GM10248 (cell line): ENCODE measurements at regions of chr21 and their contacts with region 1.

Region 1: DNA sequence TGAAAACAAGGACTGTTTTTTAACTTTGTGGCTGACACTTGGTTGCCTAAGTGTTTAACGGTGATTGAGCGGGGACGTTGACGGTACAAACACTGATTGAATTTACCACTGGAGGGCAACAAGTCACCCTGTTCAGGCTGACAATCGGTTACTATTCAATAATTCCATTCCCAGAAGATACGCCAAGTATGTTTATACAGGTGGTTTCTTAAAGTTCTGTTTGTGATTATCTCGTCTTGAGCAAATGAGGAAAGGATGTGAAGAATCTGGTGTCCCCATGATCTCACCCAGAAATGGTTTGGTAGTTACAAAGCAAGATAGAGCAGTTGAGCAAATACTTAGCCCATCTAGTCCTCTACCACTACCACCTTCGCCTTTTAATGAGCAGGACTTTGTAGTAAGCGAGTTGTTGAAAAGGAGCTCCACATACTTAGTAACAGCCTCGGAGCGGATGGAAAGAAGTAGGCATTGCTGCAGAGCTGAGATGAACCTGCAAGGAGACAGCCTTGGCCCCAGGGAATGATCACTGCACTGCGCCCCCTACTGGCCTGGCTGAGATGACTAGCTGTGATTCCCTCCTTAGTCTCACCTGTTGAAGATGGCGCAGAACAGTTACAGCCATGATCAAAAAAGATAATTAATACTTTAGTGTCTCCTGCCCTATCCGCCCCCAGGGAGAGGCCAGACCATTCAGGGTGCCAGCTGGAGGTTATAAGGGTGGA is 36.3 kb downstream of the IFNAR1 start:
- DNase-seq: peak; percentile 80
- CTCF ChIP-seq: peak; percentile 92

Region 2: DNA sequence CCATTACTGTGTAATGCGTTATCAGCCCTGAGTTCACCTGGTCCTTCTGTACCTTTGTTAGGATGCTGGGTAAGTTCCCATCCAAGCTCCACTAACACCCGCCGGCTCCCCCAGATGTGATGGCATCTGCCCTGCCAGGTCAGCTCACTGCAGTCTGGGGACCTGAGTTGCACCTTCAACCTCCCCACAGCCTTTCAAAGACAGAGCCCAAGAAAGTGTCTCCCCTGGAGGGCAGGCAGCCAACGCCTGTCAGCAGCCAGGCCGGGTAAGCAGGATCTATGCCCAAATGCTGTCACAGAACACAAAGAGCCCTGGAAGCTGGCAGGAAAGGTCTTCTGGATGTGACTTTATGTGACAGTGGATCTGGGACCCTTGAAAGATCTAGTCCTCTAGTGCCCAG is 1048.7 kb before region 1 on chr21:
- CTCF ChIA-PET with region 1: no interaction called
- POLR2A ChIA-PET with region 1: no interaction called
- DNase-seq: no peak
- CTCF ChIP-seq: no peak

Region 3: GRCh38 chr21:33205476-33205875 is 155.6 kb before region 1 on chr21:
- CTCF ChIA-PET with region 1: interaction called, 26 read pairs
- POLR2A ChIA-PET with region 1: no interaction called
- DNase-seq: no peak
- CTCF ChIP-seq: peak; percentile 24

Region 4: DNA sequence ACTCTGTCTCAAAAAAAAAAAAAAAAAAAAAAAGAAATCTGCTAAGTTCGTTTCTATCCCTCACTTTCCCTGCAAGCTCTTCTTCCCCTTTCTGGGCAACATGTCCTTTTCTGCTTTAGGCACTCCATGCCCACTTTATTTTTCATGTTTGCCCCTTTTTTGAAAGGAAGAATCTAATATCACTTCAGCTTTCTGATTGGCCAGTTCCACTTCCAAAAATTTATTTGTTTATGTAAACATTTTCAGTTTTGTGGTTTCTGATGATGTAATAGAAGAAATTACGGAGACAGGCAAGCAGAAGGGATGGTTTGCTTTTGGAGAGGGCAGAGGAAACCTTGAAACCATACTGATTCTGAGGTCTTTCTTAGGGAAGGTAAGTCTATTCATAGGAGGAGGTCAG is 21.1 kb before region 1 on chr21:
- CTCF ChIA-PET with region 1: interaction called, 102 read pairs
- POLR2A ChIA-PET with region 1: no interaction called
- DNase-seq: no peak
- CTCF ChIP-seq: no peak

Region 5: DNA sequence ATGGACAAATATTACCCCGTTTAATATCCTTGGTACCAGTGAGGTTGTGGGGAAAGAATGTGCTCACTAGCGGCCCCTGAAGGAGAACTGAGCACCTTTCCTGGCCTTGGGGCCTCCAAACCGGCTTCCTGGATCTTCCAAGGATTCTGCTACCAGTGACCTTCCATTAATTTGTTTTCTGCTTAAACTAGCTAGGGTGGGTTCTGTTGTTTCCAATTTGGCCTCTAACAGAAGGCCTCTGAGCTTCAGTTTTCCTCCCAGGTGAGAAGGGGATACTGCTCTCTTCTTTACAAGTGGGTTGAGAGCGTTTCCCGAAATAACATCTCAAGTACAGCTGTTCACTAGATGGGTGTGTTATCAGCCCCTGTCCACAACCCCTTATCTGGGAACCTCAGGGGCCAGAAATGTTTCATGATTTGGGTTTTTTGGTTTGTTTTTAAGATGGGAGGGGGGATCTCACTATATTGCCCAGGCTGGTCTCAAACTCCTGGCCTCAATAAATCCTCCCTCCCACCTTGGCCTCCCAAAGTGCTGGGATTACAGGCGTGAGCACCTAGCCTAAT is 25.3 kb after region 1 on chr21:
- CTCF ChIA-PET with region 1: interaction called, 142 read pairs
- POLR2A ChIA-PET with region 1: no interaction called
- DNase-seq: no peak
- CTCF ChIP-seq: no peak

Region 6: GRCh38 chr21:33412832-33413519 is 51.9 kb after region 1 on chr21:
- CTCF ChIA-PET with region 1: interaction called, 27 read pairs
- POLR2A ChIA-PET with region 1: no interaction called
- DNase-seq: peak; percentile 41
- CTCF ChIP-seq: no peak

Region 7: DNA sequence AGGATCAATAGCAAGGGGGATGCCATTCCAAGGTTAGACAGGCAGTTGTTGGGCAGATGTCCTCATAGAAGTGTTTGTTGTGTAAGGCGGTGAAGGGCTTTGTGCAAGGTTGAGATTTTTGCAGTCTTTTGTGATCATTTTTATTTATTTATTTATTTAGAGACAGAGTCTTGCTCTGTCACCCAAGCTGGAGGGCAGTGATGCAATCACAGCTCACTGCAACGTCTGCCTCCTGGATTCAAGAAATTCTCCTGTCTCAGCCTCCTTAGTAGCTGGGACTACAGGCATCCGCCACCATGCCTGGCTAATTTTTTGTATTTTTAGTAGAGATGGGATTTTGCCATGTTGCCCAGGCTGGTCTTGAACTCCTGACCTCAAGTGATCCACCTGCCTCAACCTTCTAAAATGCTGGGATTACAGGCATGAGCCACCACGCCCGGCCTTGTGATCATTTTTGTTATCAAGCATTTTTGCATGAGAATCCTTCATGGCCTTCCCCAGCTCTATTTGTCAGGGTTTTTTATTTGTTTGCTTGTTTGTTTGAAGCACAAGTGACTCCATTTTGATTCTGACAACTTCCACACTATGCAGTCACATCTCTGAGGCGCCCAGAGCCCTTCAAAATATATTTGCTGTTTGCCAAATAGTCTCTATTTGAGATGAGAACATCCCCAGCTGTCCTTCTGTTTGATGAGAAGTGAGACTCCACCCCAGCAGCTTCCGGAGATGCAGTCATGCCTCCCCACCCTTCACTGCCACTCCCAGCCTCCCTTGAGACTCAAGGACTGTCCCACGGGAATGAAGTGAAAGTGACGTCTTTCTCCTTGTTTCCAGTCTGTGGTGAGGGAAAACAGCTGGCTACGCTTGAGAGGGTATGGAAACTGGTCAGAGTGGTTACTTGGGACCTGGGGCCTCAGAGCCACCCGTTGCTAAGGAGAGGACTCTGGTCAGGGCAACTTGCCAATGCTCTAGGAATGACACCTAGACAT is 80.7 kb after region 1 on chr21:
- CTCF ChIA-PET with region 1: interaction called, 65 read pairs
- POLR2A ChIA-PET with region 1: interaction called, 7 read pairs
- DNase-seq: peak; percentile 73
- CTCF ChIP-seq: no peak

Region 8: DNA sequence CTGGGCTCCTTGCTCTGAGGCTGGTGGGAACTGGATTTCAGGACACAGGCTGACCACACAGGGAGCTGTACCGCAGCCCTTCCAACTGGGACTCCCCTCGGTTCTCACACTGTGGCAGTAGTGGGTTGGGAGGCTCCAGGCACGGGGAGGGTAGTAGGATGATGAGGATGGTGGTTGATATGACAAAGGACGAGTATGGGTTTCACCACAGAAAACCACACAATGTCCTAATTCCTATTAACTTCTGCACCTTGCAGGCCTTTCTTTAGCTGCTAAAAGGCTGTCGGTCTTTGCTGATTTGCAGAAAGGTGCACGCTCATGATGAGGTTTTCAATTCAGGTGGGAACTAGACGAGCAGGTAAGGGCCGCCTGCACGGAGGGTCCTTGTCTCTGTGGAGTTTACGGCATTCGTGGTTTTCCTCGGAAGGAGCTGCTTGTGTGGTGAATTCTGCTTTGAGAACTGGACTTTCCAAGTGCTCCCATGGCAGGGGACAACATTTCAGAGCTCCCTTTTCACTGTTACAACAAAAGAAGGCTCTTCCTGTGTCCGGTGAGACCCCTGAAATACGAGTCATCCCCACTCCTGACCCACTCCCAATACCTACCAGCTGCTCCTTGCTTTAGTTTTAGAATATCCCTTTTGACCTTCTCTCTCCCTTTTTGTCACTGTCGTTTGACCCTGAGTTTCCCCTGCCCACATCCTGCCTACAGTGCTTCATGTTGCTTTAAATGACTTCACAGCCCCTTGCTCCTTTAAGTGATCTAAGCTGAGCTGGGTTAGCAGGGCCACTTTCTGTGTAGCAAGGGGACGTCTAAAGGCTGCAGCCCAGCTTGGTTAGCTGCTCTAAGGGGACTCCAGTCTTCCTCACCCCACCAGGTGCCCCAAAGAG is 837.4 kb after region 1 on chr21:
- CTCF ChIA-PET with region 1: no interaction called
- POLR2A ChIA-PET with region 1: no interaction called
- DNase-seq: no peak
- CTCF ChIP-seq: no peak